ENCODE measurements at regions of chr1 and their contacts with region 1.

Region 1: DNA sequence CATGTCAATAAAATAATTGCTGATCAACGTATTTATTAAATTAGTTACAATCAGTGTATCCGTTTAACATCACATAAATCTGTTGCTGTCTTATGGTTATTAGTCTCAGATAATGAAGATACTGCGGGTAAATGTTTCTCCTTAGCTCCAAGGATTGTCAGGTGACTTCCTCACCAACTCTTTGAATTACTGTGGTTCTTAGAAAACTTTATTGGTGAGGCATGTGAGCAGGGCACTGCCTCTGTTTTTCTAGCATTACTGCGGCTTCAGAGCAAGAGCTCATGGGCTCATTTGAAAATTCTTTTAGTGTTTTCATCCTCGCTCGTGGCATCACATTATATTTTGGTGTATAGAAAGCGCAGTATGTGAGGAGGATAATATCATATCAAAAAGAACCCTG is 555.9 kb downstream of the LMO4 start:
- DNase-seq: no peak
- H3K4me3 ChIP-seq: no peak overlapping the region
- H3K27ac ChIP-seq: no peak overlapping the region
- H3K4me1 ChIP-seq: no peaks in the 10 kb centered on the region
- H3K27me3 ChIP-seq: no peaks in the 10 kb centered on the region
- CTCF ChIP-seq: no peak

Region 2: GRCh38 chr1:87362834-87363426 is 521.7 kb before region 1 on chr1:
- CTCF ChIA-PET with region 1: no interaction called
- POLR2A ChIA-PET with region 1: interaction called, 10 read pairs
- intact Hi-C with region 1: no loop called
- DNase-seq: no peak
- H3K4me3 ChIP-seq: no peak overlapping the region
- H3K27ac ChIP-seq: no peak overlapping the region
- H3K4me1 ChIP-seq: no peaks in the 10 kb centered on the region
- H3K27me3 ChIP-seq: no peaks in the 10 kb centered on the region
- CTCF ChIP-seq: no peak

Region 3: DNA sequence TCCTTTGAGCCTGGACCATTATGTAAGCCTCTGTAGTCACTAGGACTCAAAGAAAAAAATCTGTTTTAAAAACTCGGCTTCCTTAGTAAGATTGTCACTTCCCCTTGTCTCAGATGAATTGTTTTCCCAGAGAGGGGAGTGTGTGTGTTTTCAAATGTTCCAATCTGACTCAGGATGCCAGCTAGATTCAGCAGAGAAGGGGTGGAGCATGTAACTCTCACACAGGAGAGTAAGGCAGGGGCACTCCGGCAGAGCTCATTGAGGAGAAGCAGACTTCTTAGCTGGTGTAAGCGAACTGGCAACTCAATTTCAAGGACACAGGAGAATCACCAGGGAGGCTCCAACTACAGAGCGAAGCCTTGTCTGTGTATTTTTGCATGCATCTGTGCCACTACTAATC is 67.3 kb after region 1 on chr1:
- CTCF ChIA-PET with region 1: no interaction called
- POLR2A ChIA-PET with region 1: no interaction called
- intact Hi-C with region 1: no loop called
- DNase-seq: no peak
- H3K4me3 ChIP-seq: no peak overlapping the region
- H3K27ac ChIP-seq: no peak overlapping the region
- H3K4me1 ChIP-seq: no peaks in the 10 kb centered on the region
- H3K27me3 ChIP-seq: no peaks in the 10 kb centered on the region
- CTCF ChIP-seq: no peak

Measured in PC-9 (cell line).